ENCODE measurements at regions of chr4 and their contacts with region 1.

Region 1: GRCh38 chr4:165537028-165537648 is 158.3 kb downstream of the CPE start:
- DNase-seq: no peak
- ATAC-seq: peak; percentile 34

Region 2: GRCh38 chr4:165855191-165855590 is 318.1 kb after region 1 on chr4:
- intact Hi-C with region 1: loop called (anchors 10 kb)
- DNase-seq: no peak
- ATAC-seq: no peak

Region 3: DNA sequence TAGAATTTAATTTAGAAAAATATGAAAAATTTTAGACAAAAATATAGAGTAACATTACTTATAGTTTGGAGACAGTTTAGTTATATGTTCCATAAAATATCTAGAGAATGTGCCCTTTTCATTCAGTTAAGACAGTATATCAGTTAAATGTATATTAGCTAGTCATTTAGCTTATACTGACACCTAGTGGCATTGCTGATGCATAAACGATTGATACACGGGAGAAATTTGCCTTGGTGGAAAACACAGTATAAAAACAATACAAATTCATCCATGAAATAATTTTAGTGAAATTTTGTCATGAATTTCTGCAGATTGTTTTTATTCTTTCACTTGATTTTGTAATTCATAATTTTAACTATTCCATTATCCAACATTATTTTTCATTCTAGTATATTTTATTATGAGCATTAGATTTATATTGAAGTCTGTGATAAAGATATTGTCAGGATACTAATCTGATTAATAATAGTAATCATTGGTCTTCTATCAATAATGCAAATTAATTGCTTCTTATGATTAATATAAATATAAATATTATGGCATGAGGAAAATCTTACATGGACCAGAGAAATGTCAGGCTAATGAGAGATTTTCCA is 554.9 kb after region 1 on chr4:
- intact Hi-C with region 1: loop called (anchors 1 kb)
- DNase-seq: no peak
- ATAC-seq: no peak

Region 4: DNA sequence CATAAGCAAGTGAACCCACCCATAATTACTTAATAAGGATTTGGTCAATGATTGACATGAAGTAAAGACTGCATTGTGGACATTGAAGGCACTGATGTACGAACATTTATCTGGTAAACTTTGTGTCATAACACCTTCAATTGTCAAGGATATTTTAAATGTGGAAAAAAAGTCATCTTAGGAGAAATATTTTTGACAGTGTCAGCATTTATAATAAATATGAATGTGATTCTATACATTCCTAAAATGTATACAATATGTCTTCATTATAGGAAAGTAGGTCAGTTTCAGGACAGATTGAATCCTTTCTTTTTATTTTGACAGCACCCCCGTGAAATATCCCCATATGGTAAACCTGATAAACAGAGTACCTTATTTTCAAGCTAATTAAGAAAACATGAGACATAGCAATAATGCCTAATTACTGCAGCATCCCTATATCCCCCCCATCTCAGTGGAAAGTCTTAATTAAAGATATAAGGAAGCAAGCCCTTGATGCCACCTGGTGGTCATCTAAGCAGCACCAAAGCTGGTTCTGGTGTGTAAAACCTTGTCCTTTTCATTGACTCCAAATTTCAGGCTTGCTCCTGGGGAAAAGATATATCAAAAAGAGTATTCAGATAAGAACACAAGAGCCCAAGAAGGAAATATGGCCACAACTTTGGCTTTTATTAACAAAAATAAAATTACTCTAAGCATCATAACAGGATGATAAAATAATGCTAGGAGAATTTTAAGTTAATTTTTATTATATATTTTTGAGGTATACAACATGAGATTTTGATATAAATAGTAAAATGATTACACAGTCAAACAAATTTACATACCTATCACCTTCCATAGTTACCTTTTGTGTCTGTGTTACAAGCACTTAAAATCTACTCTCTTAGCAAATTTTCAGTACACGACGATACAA is 715.6 kb after region 1 on chr4:
- intact Hi-C with region 1: loop called (anchors 10 kb)
- DNase-seq: no peak
- ATAC-seq: no peak

Measured in left ventricle myocardium superior (tissue), 1 donor.